ENCODE measurements at regions of chr9 and their contacts with region 1.

Region 1: GRCh38 chr9:13427587-13427986 is 148.1 kb upstream of the MPDZ start:
- DNase-seq: peak in 2 of 9 donors; percentile 5
- ATAC-seq: no peak
- H3K4me3 ChIP-seq: no peak overlapping the region
- H3K4me3 Mint-ChIP-seq: no peak overlapping the region
- H3K27ac ChIP-seq: no peak overlapping the region
- H3K27ac Mint-ChIP-seq: no peak overlapping the region
- H3K4me1 ChIP-seq: no peaks in the 10 kb centered on the region
- H3K4me1 Mint-ChIP-seq: no peaks in the 10 kb centered on the region
- H3K27me3 ChIP-seq: no peaks in the 10 kb centered on the region
- H3K27me3 Mint-ChIP-seq: no peaks in the 10 kb centered on the region

Region 2: DNA sequence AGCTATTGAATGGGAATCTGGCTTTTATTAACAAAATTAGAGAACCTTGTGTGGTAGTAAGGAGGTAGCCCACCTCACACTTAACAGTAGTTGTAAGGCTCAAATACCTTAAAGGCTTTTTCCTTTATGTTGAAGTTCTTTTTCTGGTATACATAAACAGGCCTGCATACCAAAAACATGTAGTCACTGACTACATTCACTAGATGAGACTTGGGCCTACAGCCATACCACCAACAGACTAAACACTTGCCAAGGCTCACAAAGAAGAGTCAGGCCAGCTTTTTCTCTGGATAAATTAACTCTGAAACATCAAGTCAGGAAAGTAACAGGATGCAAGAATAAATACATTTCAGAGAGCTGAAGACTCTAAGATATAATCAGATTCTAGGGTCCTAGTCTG is 69.5 kb before region 1 on chr9:
- CTCF ChIA-PET with region 1: no interaction called
- POLR2A ChIA-PET with region 1: no interaction called
- intact Hi-C with region 1: no loop called
- DNase-seq: no peak
- ATAC-seq: no peak
- H3K4me3 ChIP-seq: no peak overlapping the region
- H3K4me3 Mint-ChIP-seq: no peak overlapping the region
- H3K27ac ChIP-seq: no peak overlapping the region
- H3K27ac Mint-ChIP-seq: no peak overlapping the region
- H3K4me1 ChIP-seq: no peaks in the 10 kb centered on the region
- H3K4me1 Mint-ChIP-seq: no peaks in the 10 kb centered on the region
- H3K27me3 ChIP-seq: no peaks in the 10 kb centered on the region
- H3K27me3 Mint-ChIP-seq: no peaks in the 10 kb centered on the region

Region 3: DNA sequence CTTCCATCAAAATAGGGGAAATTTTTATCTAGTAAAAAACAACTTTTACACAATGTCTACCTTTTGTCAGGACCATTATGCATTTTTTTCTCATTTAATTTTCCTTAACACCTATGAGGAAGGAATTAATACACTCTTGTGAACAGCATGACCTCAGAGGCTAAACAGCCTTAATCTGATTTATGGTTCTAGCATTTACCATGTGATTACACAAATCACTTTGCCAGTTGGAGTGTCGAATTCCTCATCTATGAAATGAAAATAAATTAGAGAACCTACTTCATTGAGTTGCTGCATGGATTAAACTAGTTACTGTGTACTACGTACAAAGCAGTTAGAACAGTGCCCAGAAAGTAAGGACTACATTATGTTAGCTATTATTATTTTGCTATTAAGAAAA is 39.6 kb after region 1 on chr9:
- CTCF ChIA-PET with region 1: no interaction called
- POLR2A ChIA-PET with region 1: no interaction called
- intact Hi-C with region 1: no loop called
- DNase-seq: no peak
- ATAC-seq: no peak
- H3K4me3 ChIP-seq: no peak overlapping the region
- H3K4me3 Mint-ChIP-seq: no peak overlapping the region
- H3K27ac ChIP-seq: no peak overlapping the region
- H3K27ac Mint-ChIP-seq: no peak overlapping the region
- H3K4me1 ChIP-seq: no peaks in the 10 kb centered on the region
- H3K4me1 Mint-ChIP-seq: no peaks in the 10 kb centered on the region
- H3K27me3 ChIP-seq: no peaks in the 10 kb centered on the region
- H3K27me3 Mint-ChIP-seq: no peaks in the 10 kb centered on the region

Region 4: DNA sequence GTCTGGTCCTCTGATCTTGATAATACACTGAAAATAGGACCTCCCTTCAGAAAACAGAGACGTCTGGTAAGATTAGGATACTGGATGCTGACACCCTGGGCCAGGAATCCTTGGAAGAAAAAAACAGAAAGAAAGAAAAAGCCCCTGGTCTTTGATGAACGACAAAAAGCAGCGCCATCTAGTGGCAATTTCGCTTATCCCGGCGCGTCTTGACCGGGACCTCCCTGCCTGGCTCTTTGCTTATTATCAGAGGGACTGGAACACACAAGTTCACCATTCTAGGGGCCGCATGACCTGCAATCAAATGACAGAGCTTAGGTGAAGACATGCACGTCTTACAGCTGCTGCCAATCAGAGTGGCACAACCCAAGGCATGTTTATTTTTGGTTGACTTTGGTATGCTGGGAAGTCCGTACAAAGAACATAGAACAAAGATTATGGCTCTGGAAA is 1001.2 kb after region 1 on chr9:
- CTCF ChIA-PET with region 1: no interaction called
- POLR2A ChIA-PET with region 1: no interaction called
- intact Hi-C with region 1: loop called in 1 of 2 experiments (anchors 2 kb)
- DNase-seq: peak in 1 of 9 donors; percentile 27
- ATAC-seq: no peak
- H3K4me3 ChIP-seq: no peak overlapping the region
- H3K4me3 Mint-ChIP-seq: no peak overlapping the region
- H3K27ac ChIP-seq: no peak overlapping the region
- H3K27ac Mint-ChIP-seq: no peak overlapping the region
- H3K4me1 ChIP-seq: no peaks in the 10 kb centered on the region
- H3K4me1 Mint-ChIP-seq: peaks cover 0 to 5% (median 0%) of the 10 kb centered on the region in 7 donors
- H3K27me3 ChIP-seq: no peaks in the 10 kb centered on the region
- H3K27me3 Mint-ChIP-seq: peaks cover 4 to 28% (median 18%) of the 10 kb centered on the region in 5 donors

Region 5: GRCh38 chr9:14768405-14769229 is 1341.0 kb after region 1 on chr9:
- CTCF ChIA-PET with region 1: no interaction called
- POLR2A ChIA-PET with region 1: no interaction called
- intact Hi-C with region 1: loop called in 1 of 2 experiments (anchors 5 kb)
- DNase-seq: peak in 5 of 9 donors; percentile 24 to 35 (median 28)
- ATAC-seq: no peak
- H3K4me3 ChIP-seq: no peak overlapping the region
- H3K4me3 Mint-ChIP-seq: no peak overlapping the region
- H3K27ac ChIP-seq: no peak overlapping the region
- H3K27ac Mint-ChIP-seq: no peak overlapping the region
- H3K4me1 ChIP-seq: no peaks in the 10 kb centered on the region
- H3K4me1 Mint-ChIP-seq: no peaks in the 10 kb centered on the region
- H3K27me3 ChIP-seq: peaks cover 0 to 5% of the 10 kb centered on the region in 2 donors
- H3K27me3 Mint-ChIP-seq: peaks cover 8 to 40% (median 17%) of the 10 kb centered on the region in 5 donors

Measured in naive thymus-derived CD4-positive, alpha-beta T cell (primary cell).